ENCODE measurements at regions of chr6 and their contacts with region 1.

Region 1: DNA sequence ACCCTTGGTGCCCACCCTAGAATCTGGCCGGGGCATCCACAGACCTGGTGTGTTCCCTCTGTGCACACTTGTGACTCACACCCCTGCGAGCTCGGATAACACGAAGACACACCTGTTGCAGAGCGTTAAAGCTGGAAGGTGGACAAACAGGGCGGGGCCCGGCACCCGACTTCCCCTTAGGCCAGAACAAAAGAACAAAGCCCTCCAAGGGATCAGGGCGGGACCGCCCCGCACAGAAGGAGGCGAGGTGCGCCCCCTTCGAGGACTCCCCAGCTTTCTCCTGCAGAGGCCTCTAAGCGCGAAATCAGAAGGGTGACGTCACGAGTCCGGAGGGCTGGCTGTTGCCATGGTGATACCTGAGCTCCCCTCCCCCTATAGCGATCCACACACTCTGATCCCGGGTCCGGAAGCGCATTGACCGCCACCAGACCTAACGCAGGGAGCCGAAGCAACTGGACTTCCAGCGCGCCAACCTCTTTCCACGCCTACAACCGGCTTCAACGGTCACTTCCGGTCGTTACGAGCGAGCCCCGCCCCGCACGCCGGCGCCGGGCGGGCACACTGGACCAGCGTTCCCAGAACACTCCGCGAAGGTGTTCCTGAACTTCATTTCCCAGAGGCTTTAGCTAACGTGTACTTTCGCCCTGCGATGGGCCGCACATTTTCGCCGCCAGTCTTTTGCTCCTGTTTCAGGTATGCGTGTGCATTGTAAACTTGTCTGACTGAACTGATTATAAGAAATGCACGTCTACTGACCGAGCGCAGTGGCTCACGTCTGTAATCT is at the start of gene ZNF184:
- DNase-seq: peak; percentile 92
- H3K4me3 Mint-ChIP-seq: peak within 1 kb of the TSS; percentile 86
- H3K27ac Mint-ChIP-seq: peak within 1 kb of the TSS; percentile 97
- H3K4me1 Mint-ChIP-seq: peaks cover 43% of the 10 kb centered on the region
- H3K27me3 Mint-ChIP-seq: no peaks in the 10 kb centered on the region
- total RNA-seq, gene ZNF184: 12.2 to 12.7 TPM

Region 2: GRCh38 chr6:26322645-26323482 is 1149.9 kb before region 1 on chr6:
- CTCF ChIA-PET with region 1: no interaction called
- POLR2A ChIA-PET with region 1: no interaction called
- intact Hi-C with region 1: loop called (anchors 10 kb)
- DNase-seq: peak; percentile 64
- H3K4me3 Mint-ChIP-seq: peak overlapping the region; percentile 82
- H3K27ac Mint-ChIP-seq: peak overlapping the region; percentile 80
- H3K4me1 Mint-ChIP-seq: peaks cover 21% of the 10 kb centered on the region
- H3K27me3 Mint-ChIP-seq: peaks cover 25% of the 10 kb centered on the region

Region 3: GRCh38 chr6:27332692-27333641 is 139.8 kb before region 1 on chr6:
- CTCF ChIA-PET with region 1: no interaction called
- POLR2A ChIA-PET with region 1: no interaction called
- intact Hi-C with region 1: loop called (anchors 2 kb)
- DNase-seq: peak; percentile 46
- H3K4me3 Mint-ChIP-seq: peak overlapping the region; percentile 72
- H3K27ac Mint-ChIP-seq: peak overlapping the region; percentile 25
- H3K4me1 Mint-ChIP-seq: peaks cover 6% of the 10 kb centered on the region
- H3K27me3 Mint-ChIP-seq: peaks cover 28% of the 10 kb centered on the region

Region 4: GRCh38 chr6:27761391-27761790 is 288.6 kb after region 1 on chr6:
- CTCF ChIA-PET with region 1: no interaction called
- POLR2A ChIA-PET with region 1: no interaction called
- intact Hi-C with region 1: no loop called
- DNase-seq: peak; percentile 34
- H3K4me3 Mint-ChIP-seq: no peak overlapping the region
- H3K27ac Mint-ChIP-seq: no peak overlapping the region
- H3K4me1 Mint-ChIP-seq: peaks cover 28% of the 10 kb centered on the region
- H3K27me3 Mint-ChIP-seq: no peaks in the 10 kb centered on the region

Region 5: DNA sequence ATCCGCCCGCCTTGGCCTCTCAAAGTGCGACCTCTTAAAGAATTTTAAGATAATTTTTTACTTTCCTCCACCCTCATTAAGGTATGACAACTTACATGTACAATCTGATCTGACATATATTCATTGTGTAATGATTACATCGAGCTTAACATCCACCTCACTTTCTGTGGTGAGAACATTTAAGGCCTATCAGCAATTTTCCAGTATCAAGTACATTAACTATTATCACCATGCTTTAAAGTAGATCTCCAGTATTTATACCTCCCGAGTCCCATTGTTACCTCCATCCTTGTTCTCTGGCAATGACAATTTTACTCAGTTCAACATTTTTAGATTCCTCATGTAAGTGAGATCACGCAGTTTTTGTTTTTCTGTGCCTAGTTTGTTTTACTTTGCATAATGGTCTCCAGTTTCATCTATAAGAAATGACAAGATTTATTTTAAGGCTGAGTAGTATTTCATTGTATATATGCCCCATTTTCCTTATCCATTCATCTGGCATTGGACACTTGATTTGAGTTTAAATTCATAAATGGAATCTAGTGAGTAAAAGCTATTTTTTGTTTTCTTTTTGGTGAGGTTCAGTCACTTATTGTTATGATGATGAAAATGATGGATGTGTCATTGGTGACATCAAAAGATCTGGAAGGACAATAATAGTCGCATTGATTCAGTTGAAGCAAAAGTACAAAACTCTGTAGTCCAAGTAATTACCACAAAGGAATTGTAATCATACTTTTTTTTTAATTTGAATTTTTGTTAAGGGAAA is 352.4 kb after region 1 on chr6:
- CTCF ChIA-PET with region 1: no interaction called
- POLR2A ChIA-PET with region 1: no interaction called
- intact Hi-C with region 1: no loop called
- DNase-seq: no peak
- H3K4me3 Mint-ChIP-seq: peak overlapping the region; percentile 87
- H3K27ac Mint-ChIP-seq: peak overlapping the region; percentile 98
- H3K4me1 Mint-ChIP-seq: peaks cover 32% of the 10 kb centered on the region
- H3K27me3 Mint-ChIP-seq: no peaks in the 10 kb centered on the region